ENCODE measurements at regions of chr3 and their contacts with region 1.

Region 1: DNA sequence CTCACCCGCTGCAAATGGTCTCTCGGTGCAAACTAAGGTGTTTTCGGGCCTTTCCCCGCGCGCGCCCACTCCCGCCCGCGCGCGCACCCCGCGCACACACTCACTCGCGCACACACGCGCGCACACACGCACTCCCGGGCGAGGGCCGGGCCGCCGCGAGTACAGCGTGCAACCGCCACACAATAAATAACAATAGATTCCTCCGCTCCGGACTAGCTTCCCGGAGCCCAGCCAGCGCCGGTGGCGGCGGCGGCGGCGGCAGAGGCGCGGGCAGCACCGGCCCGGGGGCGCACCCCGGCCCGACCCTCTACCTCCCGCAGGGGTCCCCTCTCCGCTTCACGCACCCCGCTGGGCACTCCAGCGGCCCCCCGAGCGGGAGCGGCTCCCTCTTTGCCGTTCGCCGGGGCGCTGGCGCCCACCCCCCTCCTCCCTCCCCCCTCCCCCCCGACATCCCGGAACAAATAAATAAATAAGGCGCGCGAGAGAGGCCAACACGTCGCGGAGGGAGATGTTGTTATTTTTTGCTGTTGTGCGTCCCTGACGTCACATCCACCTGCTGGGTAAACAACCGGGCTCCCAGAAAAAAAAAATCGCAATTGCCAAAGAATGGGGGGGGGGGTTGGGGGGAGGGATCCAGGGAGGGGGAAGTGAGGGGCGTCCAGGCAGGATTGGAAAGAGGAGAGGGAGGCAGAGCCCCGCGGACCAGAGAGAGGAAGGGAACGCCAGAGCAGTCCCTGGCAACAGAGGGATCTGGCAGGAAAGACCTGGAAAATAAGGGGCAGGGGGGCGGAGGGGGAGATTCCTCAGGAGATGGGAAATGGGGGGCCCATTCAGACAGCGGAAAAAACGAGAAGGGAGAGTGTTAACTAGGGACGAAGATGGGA is at the start of gene FOXP1:
- DNase-seq: peak; percentile 86
- ATAC-seq: peak; percentile 75
- total RNA-seq, gene FOXP1: 35.2 TPM

Region 2: GRCh38 chr3:70716832-70717231 is 867.0 kb before region 1 on chr3:
- intact Hi-C with region 1: loop called (anchors 5 kb)
- DNase-seq: peak; percentile 38
- ATAC-seq: peak; percentile 57

Region 3: GRCh38 chr3:71129611-71130431 is 454.0 kb before region 1 on chr3:
- intact Hi-C with region 1: loop called (anchors 10 kb)
- DNase-seq: no peak
- ATAC-seq: peak; percentile 24

Region 4: DNA sequence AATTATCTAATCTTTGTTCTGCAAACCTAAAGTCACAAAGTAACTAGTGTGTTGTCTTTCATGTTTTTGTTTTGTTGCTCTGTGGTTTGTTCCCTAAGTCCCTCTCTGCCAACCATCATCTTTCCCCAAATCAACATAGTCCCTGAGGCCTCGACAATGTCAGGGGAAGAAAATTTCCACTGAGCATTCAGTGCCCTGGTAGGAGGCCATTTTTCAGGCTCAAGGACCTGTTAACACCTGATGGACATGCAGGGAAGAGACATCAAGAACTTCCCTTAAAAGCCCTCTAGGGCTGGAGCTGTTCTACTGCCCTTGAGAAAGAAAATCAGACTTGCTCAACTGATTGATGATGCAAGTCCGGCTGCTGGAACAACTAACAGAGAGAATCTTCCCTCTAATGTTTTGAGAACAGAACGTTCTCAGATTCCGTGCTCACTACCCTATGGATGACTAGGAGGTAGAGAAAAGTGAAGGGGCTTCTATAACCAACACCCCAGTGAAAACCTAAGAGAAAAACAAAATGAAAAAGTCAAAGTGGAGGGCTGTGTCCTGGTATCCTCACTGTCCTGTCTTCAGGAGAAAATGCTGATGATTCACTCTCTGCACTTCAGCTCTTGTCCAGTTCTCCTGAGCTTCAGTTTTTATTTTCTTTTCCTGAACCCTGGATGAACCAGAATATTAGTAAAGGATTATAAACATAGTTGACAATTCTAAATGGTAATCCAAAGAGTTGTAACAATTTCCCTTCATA is 373.4 kb before region 1 on chr3:
- intact Hi-C with region 1: no loop called
- DNase-seq: no peak
- ATAC-seq: peak; percentile 83

Region 5: DNA sequence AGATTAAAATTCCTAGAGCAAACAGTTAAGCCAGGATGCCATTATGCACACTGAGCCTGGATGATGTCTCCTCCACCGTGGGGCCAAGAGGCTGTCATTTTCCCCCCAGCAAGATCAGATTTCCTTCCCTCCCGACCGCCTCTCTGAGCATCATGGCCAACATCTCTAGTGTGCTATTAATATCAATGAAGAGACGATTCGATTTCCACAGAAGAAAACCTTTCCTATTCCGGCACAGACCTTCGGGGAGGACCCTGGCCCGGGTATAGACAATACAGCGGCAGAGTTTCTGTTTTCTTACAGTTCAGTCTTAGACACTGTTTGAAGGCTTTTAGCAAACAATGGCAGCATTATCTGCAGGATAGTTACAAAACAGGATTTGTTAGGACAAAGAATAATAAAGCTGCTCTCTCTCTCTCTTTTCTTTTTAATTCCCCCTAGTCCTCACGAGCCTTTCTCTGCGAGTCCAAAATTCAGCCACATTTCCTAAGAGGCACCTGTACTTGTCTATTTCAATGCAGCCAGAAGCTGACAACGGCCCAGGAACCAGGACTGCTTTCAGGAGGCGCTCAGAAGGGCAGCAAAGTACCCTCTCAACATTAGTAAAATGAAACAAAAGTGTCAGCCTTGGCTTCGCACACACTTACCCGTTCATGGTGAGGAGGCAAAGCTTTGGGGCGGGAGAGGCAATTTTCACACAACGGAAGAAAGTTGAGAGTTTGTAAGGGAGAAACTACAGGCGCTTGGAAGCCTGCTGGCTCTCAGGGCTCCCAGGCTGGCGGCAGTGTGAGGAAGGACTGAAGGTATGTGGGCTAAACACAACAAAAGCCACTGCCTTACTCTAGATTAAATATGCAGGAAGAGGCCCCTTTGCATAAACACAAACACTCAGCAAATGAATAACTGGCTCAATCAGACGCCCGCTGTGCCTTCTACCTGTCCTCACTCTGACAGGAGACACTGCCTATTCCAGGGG is 278.3 kb before region 1 on chr3:
- intact Hi-C with region 1: loop called (anchors 10 kb)
- DNase-seq: peak; percentile 44
- ATAC-seq: peak; percentile 90

Region 6: DNA sequence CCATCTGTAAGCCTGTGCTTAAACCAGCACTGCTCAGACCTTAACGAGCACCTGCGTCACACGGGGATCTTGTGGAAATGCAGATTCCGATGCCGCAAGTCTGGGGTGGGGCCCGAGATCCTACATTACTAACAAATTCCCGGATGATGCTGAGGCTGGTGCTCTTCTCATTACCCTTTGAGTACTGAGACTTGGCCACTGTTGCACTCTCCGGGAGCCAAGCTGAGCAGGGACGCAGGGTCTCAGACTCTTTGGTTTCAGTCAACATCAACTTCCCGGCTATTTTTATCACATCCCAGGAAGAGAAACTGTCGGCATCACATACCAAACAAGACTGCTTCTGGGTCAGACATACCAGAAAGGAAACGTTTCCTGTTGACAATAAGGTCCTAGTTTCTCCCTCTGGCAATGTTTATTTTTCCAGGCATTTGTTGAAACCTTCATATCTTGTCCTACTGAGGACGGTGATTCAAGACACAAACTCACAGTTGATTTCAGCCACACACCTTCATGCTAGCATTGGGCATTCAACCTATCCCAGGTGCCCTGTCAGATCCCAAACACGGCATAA is 987.9 kb after region 1 on chr3:
- intact Hi-C with region 1: no loop called
- DNase-seq: no peak
- ATAC-seq: no peak